Right ventricle myocardium inferior (tissue), 1 donor: ENCODE measurements at regions of chr3 and their contacts with region 1.

Region 1: DNA sequence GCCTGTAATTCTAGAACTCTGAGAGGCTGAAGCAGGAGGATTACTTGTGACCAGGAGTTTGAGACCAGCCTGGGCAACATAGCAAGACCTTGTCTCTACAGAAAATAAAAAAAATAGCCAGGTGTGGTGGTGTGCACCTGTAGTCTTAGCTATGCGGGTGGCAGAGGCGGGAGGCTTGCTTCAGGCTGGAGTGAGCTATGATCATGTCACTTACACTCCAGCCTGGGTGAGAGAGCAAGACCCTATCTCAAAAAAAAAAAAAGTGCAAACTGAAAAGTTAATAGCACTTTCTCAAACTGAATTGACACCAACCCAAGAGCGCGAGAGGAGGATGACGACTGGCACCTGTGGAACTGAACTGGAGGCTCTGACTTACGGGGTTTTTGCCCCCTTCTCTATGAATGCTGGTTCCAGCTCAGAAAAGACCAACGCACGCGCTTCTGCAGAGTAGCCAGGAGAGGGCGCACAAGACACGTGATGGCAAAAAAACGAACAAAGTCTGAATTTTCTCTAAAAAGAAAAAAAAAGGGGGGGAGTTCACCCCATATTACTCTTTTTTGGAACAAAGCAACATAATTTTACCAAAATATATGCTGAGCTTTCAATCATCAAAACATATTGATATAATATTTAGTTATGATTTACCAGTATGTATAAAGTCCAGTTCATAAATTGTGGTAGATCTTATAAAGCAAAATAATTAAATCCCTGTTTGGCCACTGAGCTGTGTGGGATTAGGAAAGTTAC is 23.7 kb downstream of the CFAP92 start:
- DNase-seq: no peak
- ATAC-seq: peak; percentile 49

Region 2: DNA sequence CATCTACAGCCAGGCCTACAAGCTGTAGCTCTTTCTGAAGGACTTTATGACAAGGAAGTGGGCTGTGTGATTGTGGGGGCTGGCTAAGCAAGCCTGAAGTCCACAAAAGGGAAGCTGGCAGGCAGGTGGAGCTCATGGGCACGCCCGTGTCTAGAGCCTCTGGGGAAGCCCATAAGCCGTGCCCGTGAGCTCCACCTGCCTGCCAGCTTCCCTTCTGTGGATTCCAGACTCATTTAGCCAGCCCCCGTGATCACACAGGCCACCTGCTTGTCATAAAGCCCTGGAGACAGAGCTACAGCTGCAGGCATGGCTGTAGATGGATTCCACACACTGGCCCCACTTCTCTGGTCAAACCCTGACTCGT is 46.2 kb after region 1 on chr3:
- intact Hi-C with region 1: no loop called
- DNase-seq: peak; percentile 15
- ATAC-seq: no peak

Region 3: GRCh38 chr3:129087138-129087702 is 117.1 kb after region 1 on chr3:
- intact Hi-C with region 1: loop called (anchors 10 kb)
- DNase-seq: peak; percentile 64
- ATAC-seq: peak; percentile 37